ENCODE measurements at regions of chr3 and their contacts with region 1.

Region 1: DNA sequence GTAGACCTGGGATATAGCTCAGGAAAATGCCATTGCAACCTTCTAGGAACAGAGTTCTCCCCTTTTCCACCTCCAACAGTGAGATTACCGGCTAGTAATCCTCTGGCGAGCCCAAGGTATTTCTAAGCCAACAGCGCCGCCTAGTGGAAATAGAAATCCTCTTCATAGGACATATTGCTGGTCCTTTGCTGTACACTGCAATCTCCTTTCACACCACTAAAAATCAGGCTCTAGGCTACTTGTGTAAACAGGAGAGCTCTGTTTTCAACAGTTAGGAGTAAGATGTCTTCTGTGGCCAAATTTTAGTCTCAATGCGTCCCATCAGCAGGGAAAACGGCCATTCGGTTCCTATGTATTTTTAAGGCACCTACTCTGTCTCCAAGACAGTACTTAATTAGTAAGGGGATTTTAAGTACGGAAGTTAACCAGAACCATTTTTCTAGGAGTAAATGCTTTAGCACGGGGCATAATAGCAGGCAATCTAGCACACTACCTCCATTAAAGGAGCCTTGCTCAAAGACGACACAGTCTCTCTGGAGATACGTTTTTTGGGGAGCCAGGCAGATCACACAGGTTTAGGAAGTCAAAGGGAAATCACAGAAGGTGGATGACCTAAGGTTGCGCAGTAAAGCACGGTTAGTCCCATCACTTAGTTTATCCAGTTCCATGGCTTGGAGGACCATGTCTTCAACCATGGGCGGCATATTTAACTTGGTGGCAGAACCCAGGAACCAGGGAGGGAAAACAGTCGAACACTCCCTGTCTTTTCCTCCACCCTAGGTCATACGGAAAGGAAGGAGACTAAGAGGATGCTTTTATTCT is 43.8 kb downstream of the NCEH1 start:
- DNase-seq: peak; percentile 90
- H3K4me3 Mint-ChIP-seq: no peak overlapping the region
- H3K27ac Mint-ChIP-seq: no peak overlapping the region
- H3K4me1 Mint-ChIP-seq: peaks cover 10% of the 10 kb centered on the region
- H3K27me3 Mint-ChIP-seq: no peaks in the 10 kb centered on the region
- CTCF ChIP-seq: peak; percentile 66

Region 2: GRCh38 chr3:172341482-172342059 is 325.5 kb before region 1 on chr3:
- CTCF ChIA-PET with region 1: interaction called, 19 read pairs
- POLR2A ChIA-PET with region 1: no interaction called
- intact Hi-C with region 1: no loop called
- DNase-seq: peak; percentile 67
- H3K4me3 Mint-ChIP-seq: no peak overlapping the region
- H3K27ac Mint-ChIP-seq: no peak overlapping the region
- H3K4me1 Mint-ChIP-seq: no peaks in the 10 kb centered on the region
- H3K27me3 Mint-ChIP-seq: no peaks in the 10 kb centered on the region
- CTCF ChIP-seq: peak; percentile 66

Region 3: GRCh38 chr3:172476347-172476746 is 190.7 kb before region 1 on chr3:
- CTCF ChIA-PET with region 1: interaction called, 16 read pairs
- POLR2A ChIA-PET with region 1: no interaction called
- intact Hi-C with region 1: loop called (anchors 2 kb)
- DNase-seq: no peak
- H3K4me3 Mint-ChIP-seq: peak overlapping the region; percentile 90
- H3K27ac Mint-ChIP-seq: no peak overlapping the region
- H3K4me1 Mint-ChIP-seq: no peaks in the 10 kb centered on the region
- H3K27me3 Mint-ChIP-seq: no peaks in the 10 kb centered on the region
- CTCF ChIP-seq: no peak

Region 4: DNA sequence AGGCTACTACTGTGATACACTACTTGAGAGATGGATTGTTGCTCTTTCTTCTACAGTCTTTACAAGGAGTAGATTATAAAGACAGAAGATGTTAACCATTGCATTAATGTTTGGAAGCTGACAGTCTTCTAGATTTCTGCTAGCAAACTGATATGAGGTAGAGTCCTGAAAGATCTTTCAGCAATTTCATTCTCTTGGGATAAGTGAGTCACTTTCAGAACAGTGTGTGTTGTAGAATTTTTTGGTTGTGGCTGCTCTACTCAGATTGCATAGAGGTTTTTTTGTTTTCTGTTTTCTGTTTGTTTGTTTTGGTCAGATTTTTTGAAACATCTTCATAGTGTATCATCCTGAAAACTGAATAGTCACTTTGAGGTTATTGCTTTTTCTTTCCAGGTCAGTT is 161.0 kb before region 1 on chr3:
- CTCF ChIA-PET with region 1: no interaction called
- POLR2A ChIA-PET with region 1: no interaction called
- intact Hi-C with region 1: no loop called
- DNase-seq: no peak
- H3K4me3 Mint-ChIP-seq: no peak overlapping the region
- H3K27ac Mint-ChIP-seq: no peak overlapping the region
- H3K4me1 Mint-ChIP-seq: no peaks in the 10 kb centered on the region
- H3K27me3 Mint-ChIP-seq: no peaks in the 10 kb centered on the region
- CTCF ChIP-seq: no peak

Region 5: GRCh38 chr3:172601066-172601832 is 65.8 kb before region 1 on chr3:
- CTCF ChIA-PET with region 1: interaction called, 42 read pairs
- POLR2A ChIA-PET with region 1: no interaction called
- intact Hi-C with region 1: loop called (anchors 2 kb)
- DNase-seq: no peak
- H3K4me3 Mint-ChIP-seq: no peak overlapping the region
- H3K27ac Mint-ChIP-seq: no peak overlapping the region
- H3K4me1 Mint-ChIP-seq: peaks cover 9% of the 10 kb centered on the region
- H3K27me3 Mint-ChIP-seq: no peaks in the 10 kb centered on the region
- CTCF ChIP-seq: no peak

Region 6: DNA sequence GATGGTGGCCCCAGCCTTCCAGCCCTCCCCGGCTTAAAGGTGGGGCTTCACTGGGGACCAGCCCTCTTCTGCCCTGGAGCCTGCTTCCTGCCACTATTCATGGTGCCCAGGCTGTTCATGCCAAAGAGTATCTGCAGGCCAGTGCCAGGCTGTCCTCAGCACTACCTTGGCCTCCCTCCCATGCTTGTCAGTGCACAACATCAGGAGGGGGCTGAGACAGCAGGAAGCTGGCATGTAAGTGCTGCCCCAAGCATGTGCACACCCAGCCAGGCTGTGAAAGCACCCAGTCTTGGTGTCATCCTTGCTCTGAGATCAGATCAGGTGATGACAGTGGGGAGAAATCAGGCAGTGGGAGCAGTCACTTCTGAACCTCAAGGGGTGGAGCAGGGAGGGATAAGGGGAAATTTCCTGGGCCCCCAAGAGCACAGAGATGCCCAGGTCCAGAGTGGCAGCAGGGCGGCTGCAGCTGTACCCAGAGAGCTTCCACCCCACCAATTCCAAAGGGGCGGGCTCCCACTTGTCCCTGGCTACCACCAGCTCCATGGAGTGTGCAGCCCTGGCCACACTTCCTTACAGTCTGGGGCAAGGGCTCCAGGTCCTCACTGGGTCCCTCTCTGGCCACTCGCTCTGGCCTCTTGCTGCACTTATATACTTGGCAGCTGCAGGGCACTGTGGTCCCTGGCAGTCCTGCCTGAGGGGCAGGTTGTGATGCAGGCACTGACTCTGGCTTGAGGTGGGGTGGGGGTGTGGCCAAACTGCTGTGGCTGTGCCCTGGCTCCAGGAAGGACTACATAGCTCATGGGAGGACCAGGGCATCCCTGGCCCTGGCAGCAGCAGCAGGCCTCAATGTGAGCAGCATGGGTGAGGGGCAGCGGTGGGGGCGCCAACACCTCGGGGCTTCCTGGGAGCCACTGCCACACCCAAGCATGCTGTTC is 52.5 kb before region 1 on chr3:
- CTCF ChIA-PET with region 1: interaction called, 11 read pairs
- POLR2A ChIA-PET with region 1: no interaction called
- intact Hi-C with region 1: no loop called
- DNase-seq: no peak
- H3K4me3 Mint-ChIP-seq: no peak overlapping the region
- H3K27ac Mint-ChIP-seq: no peak overlapping the region
- H3K4me1 Mint-ChIP-seq: peaks cover 10% of the 10 kb centered on the region
- H3K27me3 Mint-ChIP-seq: no peaks in the 10 kb centered on the region
- CTCF ChIP-seq: no peak

Region 7: GRCh38 chr3:172646439-172647015 is 20.6 kb before region 1 on chr3:
- CTCF ChIA-PET with region 1: interaction called, 23 read pairs
- POLR2A ChIA-PET with region 1: no interaction called
- intact Hi-C with region 1: no loop called
- DNase-seq: peak; percentile 96
- H3K4me3 Mint-ChIP-seq: no peak overlapping the region
- H3K27ac Mint-ChIP-seq: no peak overlapping the region
- H3K4me1 Mint-ChIP-seq: peaks cover 8% of the 10 kb centered on the region
- H3K27me3 Mint-ChIP-seq: no peaks in the 10 kb centered on the region
- CTCF ChIP-seq: no peak

Region 8: GRCh38 chr3:172710664-172711453 is 43.8 kb after region 1 on chr3 and contains the start of gene NCEH1:
- CTCF ChIA-PET with region 1: interaction called, 212 read pairs
- POLR2A ChIA-PET with region 1: interaction called, 43 read pairs
- intact Hi-C with region 1: no loop called
- DNase-seq: peak; percentile 97
- H3K4me3 Mint-ChIP-seq: peak within 1 kb of the TSS; percentile 94
- H3K27ac Mint-ChIP-seq: peak within 1 kb of the TSS; percentile 84
- H3K4me1 Mint-ChIP-seq: peaks cover 8% of the 10 kb centered on the region
- H3K27me3 Mint-ChIP-seq: no peaks in the 10 kb centered on the region
- CTCF ChIP-seq: peak; percentile 74
- total RNA-seq, gene NCEH1: 27.8 and 28.8 TPM in 2 replicates

Region 9: DNA sequence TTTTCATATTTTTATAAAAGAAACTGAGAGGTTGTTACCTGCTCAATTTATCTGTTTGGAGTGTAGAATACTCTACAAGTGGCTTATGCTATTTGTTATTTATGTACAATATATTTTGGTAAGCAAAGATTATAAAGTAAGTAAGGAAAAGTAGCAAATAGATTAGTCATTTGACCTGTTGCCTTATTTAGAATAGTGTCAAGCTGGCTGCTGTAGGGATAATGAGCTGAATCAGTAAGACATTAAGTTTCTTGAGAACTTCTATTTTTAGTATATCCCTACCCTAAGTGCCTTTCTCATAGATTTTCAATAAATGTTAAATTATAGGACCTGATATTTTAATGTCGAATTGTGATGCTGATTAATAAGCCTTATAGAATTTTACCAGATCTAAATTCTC is 120.7 kb after region 1 on chr3:
- CTCF ChIA-PET with region 1: no interaction called
- POLR2A ChIA-PET with region 1: no interaction called
- intact Hi-C with region 1: no loop called
- DNase-seq: no peak
- H3K4me3 Mint-ChIP-seq: no peak overlapping the region
- H3K27ac Mint-ChIP-seq: no peak overlapping the region
- H3K4me1 Mint-ChIP-seq: peaks cover under 1% of the 10 kb centered on the region
- H3K27me3 Mint-ChIP-seq: no peaks in the 10 kb centered on the region
- CTCF ChIP-seq: no peak

Region 10: DNA sequence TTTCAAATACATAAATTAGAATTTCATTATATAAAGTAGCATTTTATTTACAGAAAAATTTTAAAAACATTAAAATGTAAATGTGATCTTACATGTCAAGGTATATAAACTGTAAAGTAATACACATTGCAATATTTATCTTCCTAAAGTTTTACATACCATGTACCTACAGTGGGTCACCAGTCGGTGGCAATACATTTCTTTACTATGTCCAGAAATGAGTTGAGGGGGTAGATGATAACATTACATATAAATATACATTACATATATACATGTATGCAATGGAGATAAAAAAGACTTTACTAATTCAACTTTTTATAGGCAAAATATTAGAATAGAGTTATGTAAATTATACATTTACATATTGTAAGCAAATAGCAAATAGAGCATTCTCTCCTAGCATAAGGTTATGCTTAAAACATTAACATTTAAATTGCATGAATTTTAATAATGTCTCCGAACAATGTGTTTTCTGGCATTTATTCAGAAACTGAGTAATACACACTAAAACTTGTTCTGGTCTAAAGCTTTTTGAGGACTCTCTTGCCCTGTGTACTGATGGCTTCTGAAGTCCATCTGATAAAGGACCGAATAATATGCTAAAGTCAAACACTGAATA is 637.2 kb after region 1 on chr3:
- CTCF ChIA-PET with region 1: no interaction called
- POLR2A ChIA-PET with region 1: no interaction called
- intact Hi-C with region 1: no loop called
- DNase-seq: no peak
- H3K4me3 Mint-ChIP-seq: no peak overlapping the region
- H3K27ac Mint-ChIP-seq: no peak overlapping the region
- H3K4me1 Mint-ChIP-seq: no peaks in the 10 kb centered on the region
- H3K27me3 Mint-ChIP-seq: peaks cover 80% of the 10 kb centered on the region
- CTCF ChIP-seq: no peak